ENCODE measurements at regions of chr13 and their contacts with region 1.

Region 1: GRCh38 chr13:46595136-46595886 is 42.3 kb downstream of the LRCH1 start:
- DNase-seq: no peak
- ATAC-seq: peak; percentile 60
- H3K4me3 ChIP-seq: peak overlapping the region; percentile 12; the same call in 1 of the 2 replicates
- H3K27ac ChIP-seq: peak overlapping the region; percentile 62
- H3K4me1 ChIP-seq: peaks cover 76% of the 10 kb centered on the region
- H3K27me3 ChIP-seq: no peaks in the 10 kb centered on the region
- CTCF ChIP-seq: no peak
- EP300 ChIP-seq: no peak; a peak in 1 of 4 replicates
- POLR2A ChIP-seq: no peak
- RAD21 ChIP-seq: no peak

Region 2: DNA sequence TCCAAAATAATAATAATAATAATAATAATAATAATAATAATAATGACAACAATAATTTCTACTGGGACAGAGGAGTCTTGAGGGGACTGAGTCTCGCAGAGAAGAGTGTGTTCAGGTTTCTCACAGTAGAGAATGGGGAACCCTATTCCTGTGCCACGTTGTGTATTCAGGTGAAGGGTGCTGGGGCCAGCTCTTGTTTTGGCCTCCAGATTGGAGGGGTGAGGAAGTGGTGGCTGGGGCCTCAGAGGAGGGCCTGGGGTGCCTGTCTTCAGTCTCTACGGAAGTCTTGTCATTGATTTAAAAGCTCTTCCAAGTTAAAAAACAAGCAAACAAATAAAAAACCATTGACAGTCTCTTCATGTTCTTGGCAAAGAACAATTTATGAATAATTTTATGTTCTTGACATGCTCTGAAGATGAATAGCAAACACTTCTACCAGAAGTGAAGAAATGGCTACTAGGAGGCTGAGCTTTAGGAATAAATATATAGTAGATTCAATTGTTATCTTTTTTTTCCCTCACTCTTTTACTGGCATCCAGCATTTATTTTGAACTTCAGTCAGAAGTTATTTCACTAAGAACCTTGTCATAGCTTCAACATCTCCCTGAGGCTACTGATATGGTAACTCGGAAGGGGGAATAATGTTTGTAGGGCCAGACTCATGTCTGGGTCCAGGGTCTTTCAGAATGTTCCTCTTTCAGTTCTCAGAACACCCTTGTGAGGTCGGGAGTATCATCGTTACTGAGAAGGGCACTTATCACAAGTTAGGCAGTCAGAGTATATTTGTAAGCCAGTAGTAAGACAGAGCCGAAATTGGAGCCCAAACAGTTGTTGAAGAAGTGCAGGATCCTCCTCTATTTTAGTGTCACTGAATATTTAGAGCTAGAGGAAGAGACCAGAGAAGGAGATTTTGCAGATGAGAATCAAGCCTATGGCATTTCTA is 29.2 kb before region 1 on chr13:
- CTCF ChIA-PET with region 1: interaction called, 3 read pairs
- POLR2A ChIA-PET with region 1: interaction called, 5 read pairs
- RAD21 ChIA-PET with region 1: interaction called, 6 read pairs
- SMC1A ChIA-PET with region 1: interaction called, 367 read pairs
- in situ Hi-C with region 1: no loop called
- intact Hi-C with region 1: no loop called
- DNase-seq: no peak
- ATAC-seq: peak; percentile 85
- H3K4me3 ChIP-seq: peak overlapping the region; percentile 4; the same call in 1 of the 2 replicates
- H3K27ac ChIP-seq: peak overlapping the region; percentile 7
- H3K4me1 ChIP-seq: peaks cover 24% of the 10 kb centered on the region
- H3K27me3 ChIP-seq: no peaks in the 10 kb centered on the region
- CTCF ChIP-seq: no peak
- EP300 ChIP-seq: no peak
- POLR2A ChIP-seq: no peak
- RAD21 ChIP-seq: no peak

Region 3: GRCh38 chr13:46622630-46623256 is 27.4 kb after region 1 on chr13:
- CTCF ChIA-PET with region 1: interaction called, 3 read pairs
- POLR2A ChIA-PET with region 1: interaction called, 10 read pairs
- RAD21 ChIA-PET with region 1: interaction called, 6 read pairs
- SMC1A ChIA-PET with region 1: interaction called, 170 read pairs
- in situ Hi-C with region 1: no loop called
- intact Hi-C with region 1: no loop called
- DNase-seq: no peak
- ATAC-seq: peak; percentile 30
- H3K4me3 ChIP-seq: peak overlapping the region; percentile 1; the same call in 1 of the 2 replicates
- H3K27ac ChIP-seq: peak overlapping the region; percentile 55
- H3K4me1 ChIP-seq: peaks cover 61% of the 10 kb centered on the region
- H3K27me3 ChIP-seq: no peaks in the 10 kb centered on the region
- CTCF ChIP-seq: no peak
- EP300 ChIP-seq: no peak
- POLR2A ChIP-seq: no peak
- RAD21 ChIP-seq: no peak

Region 4: DNA sequence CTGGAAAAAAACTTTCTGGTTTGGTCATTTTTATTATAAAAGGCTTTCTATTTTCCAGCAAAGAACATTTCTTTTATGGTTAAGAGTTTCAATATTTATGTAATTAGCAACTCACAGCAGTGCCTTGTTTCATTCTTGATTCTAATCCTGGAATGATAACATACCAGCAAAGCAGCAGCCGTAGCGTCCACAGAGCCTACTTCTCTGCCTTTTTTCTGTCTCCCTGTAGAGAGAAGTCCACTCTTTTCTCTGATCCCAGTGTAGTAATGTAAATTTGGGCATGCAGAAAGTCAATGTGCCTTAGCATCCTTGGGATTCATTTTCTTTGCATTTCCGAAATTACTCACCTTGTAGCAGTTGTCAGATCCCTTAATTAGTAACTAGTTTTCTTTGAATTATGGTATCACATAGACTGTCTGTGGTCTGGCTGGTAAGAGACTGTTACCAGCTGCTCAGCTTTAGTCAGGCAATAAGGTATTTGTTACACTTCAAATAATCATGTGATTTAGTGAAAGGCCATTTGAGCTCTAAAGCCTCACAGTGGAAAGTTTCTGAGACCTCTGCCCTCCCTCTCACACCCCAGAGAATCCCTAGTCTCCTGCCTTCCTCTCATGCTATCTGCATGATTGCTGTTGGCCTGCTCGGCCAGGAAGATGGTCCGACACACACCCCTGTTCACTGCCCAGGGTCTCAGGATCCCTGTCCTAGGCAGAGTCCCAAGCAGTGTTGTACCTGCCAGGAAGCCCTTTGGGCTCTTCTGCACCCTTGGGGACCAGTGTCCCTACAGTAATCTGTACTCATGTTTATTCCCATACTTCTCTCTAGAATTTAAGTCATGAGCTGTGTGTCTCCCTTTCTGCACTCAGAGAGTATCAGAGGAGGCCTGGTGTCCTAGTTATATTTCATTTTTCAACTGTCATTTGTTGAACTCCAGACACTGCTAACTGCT is 44.0 kb after region 1 on chr13:
- CTCF ChIA-PET with region 1: interaction called, 7 read pairs
- POLR2A ChIA-PET with region 1: interaction called, 9 read pairs
- RAD21 ChIA-PET with region 1: interaction called, 8 read pairs
- SMC1A ChIA-PET with region 1: interaction called, 12 read pairs
- in situ Hi-C with region 1: no loop called
- intact Hi-C with region 1: no loop called
- DNase-seq: peak; percentile 71
- ATAC-seq: peak; percentile 95
- H3K4me3 ChIP-seq: peak overlapping the region; percentile 41
- H3K27ac ChIP-seq: peak overlapping the region; percentile 56
- H3K4me1 ChIP-seq: peaks cover 20% of the 10 kb centered on the region
- H3K27me3 ChIP-seq: no peaks in the 10 kb centered on the region
- CTCF ChIP-seq: no peak
- EP300 ChIP-seq: peak; percentile 93 to 96
- POLR2A ChIP-seq: no peak
- RAD21 ChIP-seq: no peak

Region 5: DNA sequence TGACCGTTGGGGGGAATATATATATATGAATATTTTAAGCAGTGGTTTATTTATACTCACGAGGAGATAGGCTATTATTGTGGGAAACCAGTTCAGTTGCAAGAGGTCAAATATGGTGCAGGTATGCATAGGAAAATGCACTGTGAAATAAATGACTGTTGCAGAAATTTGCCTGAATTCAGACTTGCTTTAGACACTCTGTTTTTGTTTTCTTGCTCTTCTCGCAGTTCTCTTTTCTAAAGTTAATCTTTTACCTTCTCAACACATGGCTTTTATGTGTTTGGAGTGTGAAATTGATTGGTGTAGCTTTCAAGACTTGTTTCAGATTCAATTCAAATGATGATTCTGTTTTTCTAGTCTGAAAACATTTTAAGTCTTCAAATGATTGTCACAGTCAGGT is 67.4 kb after region 1 on chr13:
- CTCF ChIA-PET with region 1: interaction called, 5 read pairs
- POLR2A ChIA-PET with region 1: interaction called, 10 read pairs
- RAD21 ChIA-PET with region 1: interaction called, 12 read pairs
- SMC1A ChIA-PET with region 1: interaction called, 95 read pairs
- in situ Hi-C with region 1: no loop called
- intact Hi-C with region 1: no loop called
- DNase-seq: no peak
- ATAC-seq: peak; percentile 70
- H3K4me3 ChIP-seq: no peak overlapping the region
- H3K27ac ChIP-seq: peak overlapping the region; percentile 51; the same call in 1 of the 2 replicates
- H3K4me1 ChIP-seq: peaks cover 47% of the 10 kb centered on the region
- H3K27me3 ChIP-seq: no peaks in the 10 kb centered on the region
- CTCF ChIP-seq: no peak
- EP300 ChIP-seq: peak in 1 of 2 experiments; percentile 59; a peak in 2 of 4 replicates
- POLR2A ChIP-seq: no peak
- RAD21 ChIP-seq: no peak